ENCODE measurements at regions of chr6 and their contacts with region 1.

Region 1: DNA sequence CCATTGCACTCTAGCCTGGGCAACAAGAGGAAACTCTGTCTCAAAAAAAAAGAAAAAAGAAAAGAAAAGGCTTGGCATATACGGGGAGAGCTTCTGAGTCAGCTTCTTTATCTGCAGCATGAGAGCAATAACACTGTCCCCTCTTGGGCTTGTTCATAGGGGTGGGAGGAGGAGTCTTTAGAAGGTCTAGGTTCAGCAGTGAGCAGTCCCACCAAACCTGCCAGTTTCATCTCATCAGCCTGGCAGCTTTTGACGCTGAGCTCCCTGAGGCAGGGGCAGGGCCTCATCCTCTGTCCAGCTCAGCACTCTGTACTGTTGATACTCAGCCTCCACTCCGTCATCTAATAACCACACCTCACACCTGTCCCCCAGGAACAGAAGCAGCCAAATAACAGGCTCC is 5.6 kb upstream of the C6orf132 start:
- DNase-seq: no peak
- ATAC-seq: no peak
- H3K4me3 ChIP-seq: no peak overlapping the region
- H3K27ac ChIP-seq: no peak overlapping the region
- H3K4me1 ChIP-seq: peaks cover 4% of the 10 kb centered on the region
- H3K27me3 ChIP-seq: no peaks in the 10 kb centered on the region
- CTCF ChIP-seq: no peak

Region 2: GRCh38 chr6:42075159-42075838 is 72.8 kb before region 1 on chr6:
- CTCF ChIA-PET with region 1: interaction called, 11 read pairs
- POLR2A ChIA-PET with region 1: no interaction called
- in situ Hi-C with region 1: no loop called
- intact Hi-C with region 1: no loop called
- DNase-seq: peak; percentile 51
- ATAC-seq: peak; percentile 86
- H3K4me3 ChIP-seq: no peak overlapping the region
- H3K27ac ChIP-seq: no peak overlapping the region
- H3K4me1 ChIP-seq: no peaks in the 10 kb centered on the region
- H3K27me3 ChIP-seq: no peaks in the 10 kb centered on the region
- CTCF ChIP-seq: peak; percentile 90

Measured in Panc1 (cell line).